OCI-LY7 (cell line): ENCODE measurements at regions of chr5 and their contacts with region 1.

Region 1: DNA sequence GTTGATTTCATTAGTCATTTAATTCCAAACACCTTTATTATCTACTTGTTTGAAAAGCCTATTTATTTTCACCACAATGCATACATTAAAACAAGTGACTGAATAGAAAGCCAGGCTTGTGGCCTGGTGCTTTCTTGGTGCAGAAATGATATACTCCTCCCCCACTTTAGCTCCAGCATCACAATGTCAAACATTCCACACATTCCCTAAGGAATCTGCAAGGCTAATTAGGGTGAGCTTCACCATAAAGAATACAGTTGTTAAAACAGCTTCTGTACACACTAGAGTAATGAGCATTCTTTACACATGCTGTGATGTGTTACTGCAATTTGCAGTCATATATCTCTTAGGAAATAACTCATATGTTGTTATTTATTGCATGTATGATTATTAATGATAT is 705.7 kb downstream of the CETN3 start:
- DNase-seq: no peak
- H3K4me3 ChIP-seq: no peak overlapping the region
- H3K27ac ChIP-seq: no peak overlapping the region
- H3K4me1 ChIP-seq: no peaks in the 10 kb centered on the region
- CTCF ChIP-seq: no peak

Region 2: DNA sequence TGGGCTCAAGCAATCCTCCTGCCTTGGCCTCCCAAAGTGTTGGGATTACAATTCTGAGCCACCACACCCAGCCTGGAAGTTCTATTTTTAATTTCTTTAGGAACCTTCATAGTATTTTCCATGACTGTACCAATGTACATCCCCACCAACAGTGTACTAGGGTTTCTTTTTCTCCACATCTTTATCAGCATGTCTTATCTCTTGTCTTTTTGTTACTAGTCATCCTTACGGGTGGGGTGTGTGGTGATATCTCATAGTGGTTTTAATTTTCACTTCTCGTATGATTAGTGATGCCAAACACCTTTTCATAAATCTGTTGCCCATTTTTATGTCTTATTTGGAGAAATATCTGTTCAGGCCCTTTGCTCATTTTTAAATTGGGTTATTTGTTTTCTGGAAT is 697.8 kb before region 1 on chr5:
- CTCF ChIA-PET with region 1: no interaction called
- POLR2A ChIA-PET with region 1: no interaction called
- intact Hi-C with region 1: loop called (anchors 5 kb)
- DNase-seq: no peak
- H3K4me3 ChIP-seq: no peak overlapping the region
- H3K27ac ChIP-seq: no peak overlapping the region
- H3K4me1 ChIP-seq: no peaks in the 10 kb centered on the region
- CTCF ChIP-seq: no peak

Region 3: DNA sequence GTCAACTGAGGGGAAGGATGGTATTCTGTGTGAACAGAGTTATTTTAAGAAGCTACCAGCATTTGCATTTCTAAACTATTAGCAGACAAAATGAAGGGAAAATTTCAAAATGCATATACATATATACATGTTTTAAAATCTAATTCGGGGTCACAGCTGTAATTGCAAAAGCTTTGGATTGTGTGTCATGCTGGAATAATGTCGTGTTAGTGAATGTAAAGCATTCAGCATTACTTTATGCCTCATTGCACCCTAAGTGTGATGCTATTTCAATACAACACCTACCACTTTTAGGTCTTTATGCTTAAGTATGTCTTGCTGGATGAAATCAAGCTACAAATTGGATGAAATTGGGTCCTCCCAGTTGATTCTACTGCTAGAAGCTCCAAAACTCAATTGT is 133.3 kb before region 1 on chr5:
- CTCF ChIA-PET with region 1: no interaction called
- POLR2A ChIA-PET with region 1: no interaction called
- intact Hi-C with region 1: no loop called
- DNase-seq: no peak
- H3K4me3 ChIP-seq: no peak overlapping the region
- H3K27ac ChIP-seq: no peak overlapping the region
- H3K4me1 ChIP-seq: no peaks in the 10 kb centered on the region
- CTCF ChIP-seq: no peak